ENCODE measurements at regions of chr16 and their contacts with region 1.

Region 1: DNA sequence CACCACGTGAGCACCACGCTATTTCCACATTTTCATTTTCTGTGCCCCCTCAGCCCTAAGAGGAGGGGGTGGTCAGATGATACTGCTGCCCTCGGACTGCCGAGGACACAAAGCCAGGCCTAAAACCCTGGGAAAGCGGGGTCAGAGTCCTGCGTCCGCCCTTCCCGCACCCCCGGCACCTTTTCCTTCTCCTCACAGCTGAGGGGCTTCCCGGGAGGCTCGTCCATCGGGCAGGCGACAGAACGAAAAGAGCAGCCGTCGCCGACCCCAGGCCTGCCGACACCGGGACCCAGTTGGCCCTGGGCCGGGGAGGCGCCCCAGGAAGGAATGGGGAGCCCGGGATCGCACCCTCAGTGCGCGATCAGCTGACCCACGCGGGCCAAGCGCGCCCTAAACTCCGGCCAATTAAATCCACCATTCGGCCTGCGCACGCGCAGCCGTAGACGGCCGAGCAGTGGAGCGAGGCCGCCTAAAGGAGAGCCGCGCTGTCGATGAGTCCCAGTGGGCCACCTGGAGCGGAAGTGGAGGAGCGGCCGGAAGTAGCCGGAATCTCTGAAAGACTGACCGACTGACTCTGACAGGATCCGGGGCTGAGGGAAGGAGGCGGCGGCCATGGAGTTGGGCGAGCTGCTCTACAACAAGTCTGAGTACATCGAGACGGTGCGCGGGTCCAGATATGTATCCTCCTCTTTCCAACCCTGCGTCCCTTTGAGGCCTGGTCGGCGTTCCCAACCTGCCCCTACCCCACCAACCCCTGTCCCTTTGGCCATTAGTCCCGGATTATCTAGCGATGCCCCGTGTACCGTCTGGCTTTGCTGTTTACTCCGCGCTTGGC is at the starts of genes DCTN5 and PALB2:
- DNase-seq: peak; percentile 77 to 90 (median 80)
- H3K4me3 ChIP-seq: peak within 1 kb of the TSS; percentile 99
- H3K4me3 Mint-ChIP-seq: peak within 1 kb of the TSS; percentile 98 to 100 (median 99)
- H3K27ac ChIP-seq: peak within 1 kb of the TSS; percentile 90
- H3K27ac Mint-ChIP-seq: peak within 1 kb of the TSS; percentile 98 to 99 (median 98)
- H3K4me1 ChIP-seq: peaks cover 19% of the 10 kb centered on the region
- H3K4me1 Mint-ChIP-seq: peaks cover 36 to 51% (median 48%) of the 10 kb centered on the region in 3 donors
- H3K27me3 ChIP-seq: no peaks in the 10 kb centered on the region
- H3K27me3 Mint-ChIP-seq: no peaks in the 10 kb centered on the region
- total RNA-seq, gene DCTN5: 99.1 to 104 TPM
- total RNA-seq, gene PALB2: 27.7 to 27.8 TPM

Region 2: DNA sequence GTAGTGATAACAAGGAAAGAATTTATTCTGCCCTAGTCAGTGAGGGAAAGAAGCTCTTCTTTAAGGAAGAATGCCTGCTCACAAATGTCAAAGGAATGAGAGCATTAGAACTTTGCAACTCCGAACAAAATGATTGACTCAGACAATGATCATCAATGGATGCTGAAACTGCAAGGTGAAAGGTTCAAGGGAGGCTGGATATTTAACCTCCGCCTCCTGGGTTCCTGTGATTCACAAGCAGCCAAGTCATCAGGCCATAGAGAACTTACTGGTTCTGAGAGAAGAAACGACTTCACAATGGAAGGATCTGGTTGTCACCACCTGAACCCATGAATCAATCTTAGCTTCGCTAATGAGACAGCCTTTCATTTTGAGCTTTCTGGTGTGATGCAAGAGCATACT is 355.0 kb before region 1 on chr16:
- CTCF ChIA-PET with region 1: no interaction called
- POLR2A ChIA-PET with region 1: interaction called, 10 read pairs
- DNase-seq: no peak
- H3K4me3 ChIP-seq: no peak overlapping the region
- H3K4me3 Mint-ChIP-seq: no peak overlapping the region
- H3K27ac ChIP-seq: no peak overlapping the region
- H3K27ac Mint-ChIP-seq: no peak overlapping the region
- H3K4me1 ChIP-seq: no peaks in the 10 kb centered on the region
- H3K4me1 Mint-ChIP-seq: no peaks in the 10 kb centered on the region
- H3K27me3 ChIP-seq: no peaks in the 10 kb centered on the region
- H3K27me3 Mint-ChIP-seq: peaks cover 15 to 24% of the 10 kb centered on the region in 2 donors